ENCODE measurements at regions of chr10 and their contacts with region 1.

Region 1: GRCh38 chr10:76049581-76050290 is 618.3 kb downstream of the LRMDA start:
- DNase-seq: no peak
- ATAC-seq: peak in 5 of 8 donors; percentile 23 to 70 (median 31)
- H3K4me3 ChIP-seq: no peak overlapping the region
- H3K27ac ChIP-seq: no peak overlapping the region
- H3K4me1 ChIP-seq: peaks cover 0 to 8% (median 0%) of the 10 kb centered on the region in 9 donors
- H3K27me3 ChIP-seq: no peaks in the 10 kb centered on the region
- CTCF ChIP-seq: no peak

Region 2: GRCh38 chr10:76303682-76304316 is 254.1 kb after region 1 on chr10:
- intact Hi-C with region 1: loop called in 1 of 10 experiments (anchors 10 kb)
- DNase-seq: peak; percentile 59 to 78
- ATAC-seq: peak; percentile 90 to 97 (median 94)
- H3K4me3 ChIP-seq: no peak overlapping the region
- H3K27ac ChIP-seq: no peak overlapping the region
- H3K4me1 ChIP-seq: peaks cover 0 to 34% (median 15%) of the 10 kb centered on the region in 9 donors
- H3K27me3 ChIP-seq: no peaks in the 10 kb centered on the region
- CTCF ChIP-seq: peak; percentile 20 to 72 (median 58)

Region 3: GRCh38 chr10:76984559-76985443 is 935.1 kb after region 1 on chr10:
- intact Hi-C with region 1: loop called in 1 of 10 experiments (anchors 10 kb)
- DNase-seq: peak; percentile 47 to 58
- ATAC-seq: peak in 6 of 8 donors; percentile 57 to 87 (median 72)
- H3K4me3 ChIP-seq: no peak overlapping the region
- H3K27ac ChIP-seq: no peak overlapping the region
- H3K4me1 ChIP-seq: no peaks in the 10 kb centered on the region
- H3K27me3 ChIP-seq: peaks cover 0 to 8% (median 0%) of the 10 kb centered on the region in 7 donors
- CTCF ChIP-seq: peak; percentile 65 to 97 (median 95)

Measured in heart right ventricle (tissue), 16 donors.